Heart left ventricle (tissue), 16 donors: ENCODE measurements at regions of chr4 and their contacts with region 1.

Region 1: GRCh38 chr4:188960411-188961093 is 821.3 kb downstream of the TRIML1 start:
- DNase-seq: no peak
- ATAC-seq: peak in 3 of 4 donors; percentile 46 to 72 (median 46)
- H3K4me3 ChIP-seq: peak overlapping the region in 1 of 12 donors; percentile 36
- H3K27ac ChIP-seq: peak overlapping the region in 2 of 12 donors; percentile 10 to 34
- H3K4me1 ChIP-seq: peaks cover 0 to 5% (median 0%) of the 10 kb centered on the region in 12 donors
- H3K27me3 ChIP-seq: no peaks in the 10 kb centered on the region
- CTCF ChIP-seq: no peak
- POLR2A ChIP-seq: no peak

Region 2: GRCh38 chr4:189117426-189117825 is 156.9 kb after region 1 on chr4:
- intact Hi-C with region 1: loop called in 1 of 10 experiments (anchors 10 kb)
- DNase-seq: no peak
- ATAC-seq: no peak
- H3K4me3 ChIP-seq: no peak overlapping the region
- H3K27ac ChIP-seq: no peak overlapping the region
- H3K4me1 ChIP-seq: no peaks in the 10 kb centered on the region
- H3K27me3 ChIP-seq: peaks cover 0 to 3% (median 0%) of the 10 kb centered on the region in 9 donors
- CTCF ChIP-seq: no peak
- POLR2A ChIP-seq: no peak